Heart right ventricle (tissue), 16 donors: ENCODE measurements at regions of chr1 and their contacts with region 1.

Region 1: GRCh38 chr1:20640183-20640597 is 6.9 kb downstream of the PINK1 start:
- DNase-seq: peak in 1 of 2 donors; percentile 37
- ATAC-seq: peak in 7 of 8 donors; percentile 39 to 69 (median 63)
- H3K4me3 ChIP-seq: no peak overlapping the region
- H3K27ac ChIP-seq: no peak overlapping the region
- H3K4me1 ChIP-seq: peaks cover 2 to 25% (median 11%) of the 10 kb centered on the region in 9 donors
- H3K27me3 ChIP-seq: no peaks in the 10 kb centered on the region
- CTCF ChIP-seq: peak; percentile 74 to 87 (median 83)

Region 2: GRCh38 chr1:20528221-20528620 is 112.0 kb before region 1 on chr1:
- intact Hi-C with region 1: loop called in 9 of 10 experiments (anchors 2 to 5 kb)
- DNase-seq: no peak
- ATAC-seq: no peak
- H3K4me3 ChIP-seq: no peak overlapping the region
- H3K27ac ChIP-seq: no peak overlapping the region
- H3K4me1 ChIP-seq: no peaks in the 10 kb centered on the region
- H3K27me3 ChIP-seq: peaks cover 0 to 45% (median 25%) of the 10 kb centered on the region in 7 donors
- CTCF ChIP-seq: no peak

Region 3: GRCh38 chr1:20732588-20733360 is 92.6 kb after region 1 on chr1 and contains the start of gene SH2D5:
- intact Hi-C with region 1: no loop called
- DNase-seq: peak in 1 of 2 donors; percentile 48
- ATAC-seq: peak; percentile 36 to 80 (median 74)
- H3K4me3 ChIP-seq: peak within 1 kb of the TSS; percentile 50 to 65 (median 60)
- H3K27ac ChIP-seq: peak within 1 kb of the TSS in 3 of 10 donors; percentile 10 to 25 (median 19)
- H3K4me1 ChIP-seq: peaks cover 9 to 23% (median 21%) of the 10 kb centered on the region in 9 donors
- H3K27me3 ChIP-seq: peaks cover 0 to 58% (median 40%) of the 10 kb centered on the region in 7 donors
- CTCF ChIP-seq: peak in 7 of 9 donors; percentile 15 to 54 (median 38)
- total RNA-seq, gene SH2D5: 0.15 to 0.21 (median 0.20) TPM in 3 of 10 donors, not detected in the others